ENCODE measurements at regions of chr2 and their contacts with region 1.

Region 1: DNA sequence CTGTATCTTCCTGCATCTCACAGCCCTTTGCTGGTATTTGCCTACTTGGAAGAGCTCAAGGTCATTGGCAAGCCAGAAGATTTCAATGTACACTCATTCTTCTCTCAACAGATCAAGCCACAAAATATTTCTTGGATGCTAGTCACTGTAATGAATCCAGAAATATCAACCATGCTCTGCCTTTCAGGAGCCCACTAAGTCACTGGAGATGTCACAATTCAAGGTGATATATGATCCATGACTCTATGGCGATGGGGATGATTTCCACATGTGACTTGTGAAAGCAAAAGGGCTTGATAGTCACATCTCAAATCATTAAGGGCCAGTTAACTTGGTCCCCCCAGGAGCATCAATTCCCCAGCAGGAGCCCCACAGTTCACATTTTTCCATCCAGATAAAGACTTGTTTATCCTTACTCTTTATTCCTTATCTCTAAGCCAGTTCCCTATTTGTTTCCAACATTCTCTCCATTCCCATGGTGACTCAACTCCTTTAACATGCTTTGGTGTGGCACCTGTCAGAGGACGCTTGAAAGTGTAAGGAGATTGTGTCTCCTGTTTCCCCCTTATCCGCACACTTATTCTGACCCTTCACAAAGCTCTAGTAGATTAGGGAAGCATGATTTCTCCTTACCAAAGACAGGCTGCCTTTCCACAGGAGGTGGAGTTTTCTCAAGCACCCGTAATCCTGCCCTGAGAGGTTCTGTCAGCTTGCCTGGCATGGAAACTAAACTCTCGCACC is 15.8 kb downstream of the PKDCC start:
- DNase-seq: peak; percentile 85 to 89
- H3K4me3 ChIP-seq: peak overlapping the region; percentile 19; the same call in 1 of the 2 replicates
- H3K4me3 Mint-ChIP-seq: peak overlapping the region; percentile 54
- H3K27ac Mint-ChIP-seq: peak overlapping the region; percentile 96
- H3K4me1 ChIP-seq: peaks cover 79% of the 10 kb centered on the region
- H3K4me1 Mint-ChIP-seq: peaks cover 57% of the 10 kb centered on the region
- H3K27me3 ChIP-seq: no peaks in the 10 kb centered on the region
- H3K27me3 Mint-ChIP-seq: no peaks in the 10 kb centered on the region
- CTCF ChIP-seq: no peak

Region 2: DNA sequence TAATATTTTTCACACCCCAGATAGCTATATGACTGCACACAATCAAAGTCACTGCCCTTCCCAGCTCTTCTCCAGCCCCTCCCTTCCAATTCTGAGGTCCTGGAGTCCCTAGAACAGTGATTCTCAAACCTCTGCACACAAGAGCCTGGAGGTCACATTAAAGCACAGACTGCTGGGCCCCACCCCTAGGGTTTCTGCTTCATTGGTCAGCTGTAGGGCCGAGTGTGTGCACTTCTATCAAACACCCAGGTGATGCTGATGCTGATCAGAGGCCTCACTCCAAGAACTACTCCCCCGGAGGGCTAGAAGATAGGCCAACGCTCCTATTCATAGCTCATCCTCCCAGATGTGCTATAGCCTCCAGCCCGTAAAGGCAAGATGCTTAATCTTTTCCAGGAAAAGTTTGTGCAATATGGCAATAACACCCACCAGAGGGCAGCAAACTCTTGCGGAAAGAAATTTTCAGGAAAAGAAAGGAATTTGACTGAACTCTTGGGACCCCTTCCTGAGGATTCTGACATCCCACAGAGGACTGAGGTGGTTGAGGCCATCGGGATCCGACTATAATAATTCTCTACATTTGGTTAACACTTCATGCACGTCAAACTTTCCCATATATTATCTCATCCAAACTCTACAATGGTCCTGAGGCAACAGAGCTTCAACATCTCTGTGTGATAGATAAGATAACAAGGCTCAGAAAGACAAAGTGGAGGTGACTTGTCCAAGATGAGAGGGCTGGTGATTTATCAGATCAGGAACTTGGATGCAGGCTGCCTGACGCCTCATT is 210.0 kb before region 1 on chr2:
- CTCF ChIA-PET with region 1: interaction called, 8 read pairs
- POLR2A ChIA-PET with region 1: no interaction called
- intact Hi-C with region 1: loop called (anchors 1 kb)
- DNase-seq: peak; percentile 70 to 78
- H3K4me3 ChIP-seq: no peak overlapping the region
- H3K4me3 Mint-ChIP-seq: no peak overlapping the region
- H3K27ac Mint-ChIP-seq: peak overlapping the region; percentile 8
- H3K4me1 ChIP-seq: peaks cover 15% of the 10 kb centered on the region
- H3K4me1 Mint-ChIP-seq: peaks cover 2% of the 10 kb centered on the region
- H3K27me3 ChIP-seq: no peaks in the 10 kb centered on the region
- H3K27me3 Mint-ChIP-seq: no peaks in the 10 kb centered on the region
- CTCF ChIP-seq: peak; percentile 82 to 94

Region 3: DNA sequence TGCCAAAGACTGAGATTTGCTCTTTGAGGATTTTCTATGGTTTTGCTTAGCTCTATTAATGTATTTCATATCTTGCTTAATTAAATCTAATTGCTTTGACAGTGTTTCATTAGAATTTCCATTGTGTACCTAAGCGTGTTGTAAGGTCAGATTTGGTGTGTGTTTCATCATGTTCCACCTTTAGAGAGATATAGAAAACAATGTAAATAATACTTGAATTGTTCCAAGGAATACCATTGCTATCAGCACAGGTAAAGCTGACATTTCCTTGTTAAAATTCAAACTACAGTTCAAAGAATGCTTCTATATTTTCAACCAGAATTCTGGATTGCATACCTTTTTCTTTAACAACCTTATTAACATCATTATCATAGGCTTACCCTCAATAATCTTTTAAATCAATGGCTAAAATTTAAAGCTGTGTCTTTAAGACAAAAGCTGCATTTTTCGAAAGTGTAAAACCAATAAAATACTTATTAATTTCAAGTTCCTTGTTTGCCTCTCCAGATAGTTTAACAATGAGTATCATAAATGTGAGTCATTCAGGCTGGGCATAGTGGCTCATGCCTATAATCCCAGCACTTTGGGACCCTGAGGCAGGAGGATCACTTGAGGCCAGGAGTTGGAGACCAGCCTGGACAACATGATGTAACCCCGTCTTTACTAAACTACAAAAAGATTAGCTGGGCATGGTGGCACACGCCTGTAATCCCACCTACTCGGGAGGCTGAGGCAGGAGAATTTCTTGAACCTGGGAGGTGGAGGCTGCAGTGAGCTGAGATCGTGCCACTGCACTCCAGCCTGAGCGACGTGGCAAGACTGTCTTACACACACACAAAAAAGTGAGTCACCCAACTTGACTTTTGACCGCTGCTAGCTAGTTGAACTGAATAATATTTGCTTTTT is 203.7 kb before region 1 on chr2:
- CTCF ChIA-PET with region 1: interaction called, 6 read pairs
- POLR2A ChIA-PET with region 1: no interaction called
- intact Hi-C with region 1: loop called (anchors 1 kb)
- DNase-seq: peak; percentile 65 to 75
- H3K4me3 ChIP-seq: no peak overlapping the region
- H3K4me3 Mint-ChIP-seq: peak overlapping the region; percentile 74
- H3K27ac Mint-ChIP-seq: peak overlapping the region; percentile 98
- H3K4me1 ChIP-seq: peaks cover 50% of the 10 kb centered on the region
- H3K4me1 Mint-ChIP-seq: peaks cover 28% of the 10 kb centered on the region
- H3K27me3 ChIP-seq: no peaks in the 10 kb centered on the region
- H3K27me3 Mint-ChIP-seq: no peaks in the 10 kb centered on the region
- CTCF ChIP-seq: no peak

Region 4: GRCh38 chr2:41894563-41895333 is 168.9 kb before region 1 on chr2:
- CTCF ChIA-PET with region 1: no interaction called
- POLR2A ChIA-PET with region 1: no interaction called
- intact Hi-C with region 1: loop called (anchors 1 kb)
- DNase-seq: peak; percentile 86 to 88
- H3K4me3 ChIP-seq: no peak overlapping the region
- H3K4me3 Mint-ChIP-seq: no peak overlapping the region
- H3K27ac Mint-ChIP-seq: peak overlapping the region; percentile 56
- H3K4me1 ChIP-seq: peaks cover 39% of the 10 kb centered on the region
- H3K4me1 Mint-ChIP-seq: peaks cover 39% of the 10 kb centered on the region
- H3K27me3 ChIP-seq: no peaks in the 10 kb centered on the region
- H3K27me3 Mint-ChIP-seq: no peaks in the 10 kb centered on the region
- CTCF ChIP-seq: no peak

Region 5: GRCh38 chr2:41933585-41934320 is 129.8 kb before region 1 on chr2:
- CTCF ChIA-PET with region 1: no interaction called
- POLR2A ChIA-PET with region 1: interaction called, 3 read pairs
- intact Hi-C with region 1: loop called (anchors 1 kb)
- DNase-seq: no peak
- H3K4me3 ChIP-seq: no peak overlapping the region
- H3K4me3 Mint-ChIP-seq: no peak overlapping the region
- H3K27ac Mint-ChIP-seq: peak overlapping the region; percentile 80
- H3K4me1 ChIP-seq: peaks cover 53% of the 10 kb centered on the region
- H3K4me1 Mint-ChIP-seq: peaks cover 37% of the 10 kb centered on the region
- H3K27me3 ChIP-seq: no peaks in the 10 kb centered on the region
- H3K27me3 Mint-ChIP-seq: no peaks in the 10 kb centered on the region
- CTCF ChIP-seq: no peak

Region 6: DNA sequence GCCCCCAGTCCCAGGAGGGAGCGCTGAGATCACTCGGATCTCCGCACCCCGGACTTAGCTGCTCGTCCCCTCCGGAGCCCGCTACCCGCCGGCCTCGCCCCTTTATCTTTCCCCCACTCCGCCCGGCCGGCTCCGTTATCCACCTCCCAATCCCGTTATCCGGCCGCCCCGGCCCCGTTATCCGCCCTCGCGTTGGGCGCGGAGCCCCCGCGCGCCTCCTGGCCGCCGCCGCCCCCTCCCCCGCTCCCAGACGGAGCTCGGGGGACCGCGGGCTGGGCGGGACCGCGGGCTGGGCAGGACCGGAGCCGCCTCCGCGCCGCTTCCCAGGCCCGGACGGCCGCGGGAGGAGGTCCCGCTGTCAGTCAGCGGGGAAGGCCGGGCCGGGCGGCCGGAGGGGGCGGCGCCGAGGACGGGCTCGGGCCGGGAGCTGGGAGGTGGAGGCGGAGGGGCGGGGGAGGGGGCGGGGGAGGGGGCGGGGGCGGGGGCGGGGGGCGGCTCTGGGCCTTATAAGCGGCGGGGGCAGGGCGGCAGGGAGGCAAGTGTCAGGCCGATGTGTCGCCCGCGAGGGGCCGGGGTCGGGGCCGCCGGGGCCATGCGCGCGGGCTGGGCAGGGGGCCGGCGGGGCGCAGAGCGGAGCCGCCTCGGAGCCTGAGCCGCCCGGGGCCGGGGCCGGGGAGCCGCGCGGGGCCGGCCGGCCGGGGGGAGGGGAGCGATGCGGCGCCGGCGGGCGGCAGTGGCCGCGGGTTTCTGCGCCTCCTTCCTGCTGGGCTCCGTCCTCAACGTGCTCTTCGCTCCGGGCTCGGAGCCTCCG is 15.9 kb before region 1 on chr2 and contains the start of gene PKDCC:
- CTCF ChIA-PET with region 1: no interaction called
- POLR2A ChIA-PET with region 1: interaction called, 7 read pairs
- intact Hi-C with region 1: loop called (anchors 2 kb)
- DNase-seq: peak; percentile 84 to 92
- H3K4me3 ChIP-seq: peak within 1 kb of the TSS; percentile 65
- H3K4me3 Mint-ChIP-seq: peak within 1 kb of the TSS; percentile 98
- H3K27ac Mint-ChIP-seq: peak within 1 kb of the TSS; percentile 98
- H3K4me1 ChIP-seq: peaks cover 39% of the 10 kb centered on the region
- H3K4me1 Mint-ChIP-seq: peaks cover 13% of the 10 kb centered on the region
- H3K27me3 ChIP-seq: no peaks in the 10 kb centered on the region
- H3K27me3 Mint-ChIP-seq: no peaks in the 10 kb centered on the region
- CTCF ChIP-seq: no peak
- total RNA-seq, gene PKDCC: 322 and 339 TPM in 2 replicates

Region 7: GRCh38 chr2:42183775-42184174 is 120.2 kb after region 1 on chr2:
- CTCF ChIA-PET with region 1: no interaction called
- POLR2A ChIA-PET with region 1: no interaction called
- intact Hi-C with region 1: no loop called
- DNase-seq: no peak
- H3K4me3 ChIP-seq: no peak overlapping the region
- H3K4me3 Mint-ChIP-seq: no peak overlapping the region
- H3K27ac Mint-ChIP-seq: no peak overlapping the region
- H3K4me1 ChIP-seq: peaks cover 54% of the 10 kb centered on the region
- H3K4me1 Mint-ChIP-seq: peaks cover 25% of the 10 kb centered on the region
- H3K27me3 ChIP-seq: no peaks in the 10 kb centered on the region
- H3K27me3 Mint-ChIP-seq: no peaks in the 10 kb centered on the region
- CTCF ChIP-seq: no peak

Measured in Caco-2 (cell line).